B cell (primary cell): ENCODE measurements at regions of chr1 and their contacts with region 1.

Region 1: DNA sequence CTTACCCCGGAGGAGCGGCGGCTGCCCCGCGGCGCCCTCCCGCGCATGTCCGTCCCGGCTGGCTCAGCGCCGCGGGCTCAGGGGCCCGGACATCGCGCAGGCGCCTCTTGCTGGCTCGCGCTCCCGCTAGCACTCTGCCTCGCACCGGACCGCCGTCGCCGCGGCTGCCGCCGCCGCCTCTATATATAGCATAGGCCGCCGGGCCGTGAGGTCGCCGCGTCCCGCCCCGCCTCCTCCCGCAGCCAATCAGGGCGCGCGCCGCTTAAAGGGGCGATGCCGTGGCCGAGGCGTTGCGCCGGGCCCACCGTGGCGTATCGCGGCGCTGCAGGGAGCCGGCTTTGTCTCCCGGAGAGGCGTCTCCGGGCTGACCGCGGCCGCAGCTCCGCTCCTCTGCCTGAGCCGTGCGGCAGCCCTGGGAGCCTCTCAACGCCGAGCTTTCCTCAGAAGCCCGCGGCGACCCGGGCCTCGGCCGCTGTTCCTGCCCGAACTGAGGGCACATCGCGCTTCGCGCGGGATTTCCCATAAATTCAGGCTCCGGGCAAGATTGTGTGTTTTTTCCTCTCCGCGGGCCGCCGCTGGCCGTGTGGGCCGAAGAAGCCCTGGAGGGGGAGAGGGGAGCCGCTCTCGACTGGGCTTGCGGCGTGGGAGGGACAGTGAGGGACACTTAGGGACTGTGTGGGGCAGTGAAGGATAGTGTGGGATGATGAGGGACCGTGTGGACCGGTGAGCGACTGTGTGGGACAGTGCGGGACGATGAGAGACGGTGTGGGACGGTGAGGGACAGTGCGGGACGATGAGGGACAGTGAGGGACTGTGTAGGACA is at the start of gene ERRFI1:
- DNase-seq: peak; percentile 92
- ATAC-seq: peak; percentile 91
- H3K4me3 ChIP-seq: peak within 1 kb of the TSS in 4 of 5 experiments; percentile 48 to 68 (median 56)
- H3K4me3 Mint-ChIP-seq: peak within 1 kb of the TSS; percentile 90
- H3K27ac ChIP-seq: no peak within 1 kb of the TSS
- H3K27ac Mint-ChIP-seq: peak within 1 kb of the TSS; percentile 72
- H3K4me1 ChIP-seq: peaks cover 11 to 16% of the 10 kb centered on the region in 2 donors
- H3K4me1 Mint-ChIP-seq: peaks cover 10% of the 10 kb centered on the region
- H3K27me3 ChIP-seq: peaks cover 5 to 25% (median 15%) of the 10 kb centered on the region in 4 experiments
- H3K27me3 Mint-ChIP-seq: peaks cover 24% of the 10 kb centered on the region
- CTCF ChIP-seq: no peak
- total RNA-seq, gene ERRFI1: 1.5 and 2.0 TPM in 2 replicates

Region 2: GRCh38 chr1:8040586-8040985 is 14.2 kb after region 1 on chr1:
- CTCF ChIA-PET with region 1: no interaction called
- POLR2A ChIA-PET with region 1: no interaction called
- intact Hi-C with region 1: no loop called
- DNase-seq: no peak
- ATAC-seq: no peak
- H3K4me3 ChIP-seq: no peak overlapping the region
- H3K4me3 Mint-ChIP-seq: no peak overlapping the region
- H3K27ac ChIP-seq: no peak overlapping the region
- H3K27ac Mint-ChIP-seq: no peak overlapping the region
- H3K4me1 ChIP-seq: no peaks in the 10 kb centered on the region
- H3K4me1 Mint-ChIP-seq: no peaks in the 10 kb centered on the region
- H3K27me3 ChIP-seq: no peaks in the 10 kb centered on the region
- H3K27me3 Mint-ChIP-seq: peaks cover 19% of the 10 kb centered on the region
- CTCF ChIP-seq: no peak

Region 3: DNA sequence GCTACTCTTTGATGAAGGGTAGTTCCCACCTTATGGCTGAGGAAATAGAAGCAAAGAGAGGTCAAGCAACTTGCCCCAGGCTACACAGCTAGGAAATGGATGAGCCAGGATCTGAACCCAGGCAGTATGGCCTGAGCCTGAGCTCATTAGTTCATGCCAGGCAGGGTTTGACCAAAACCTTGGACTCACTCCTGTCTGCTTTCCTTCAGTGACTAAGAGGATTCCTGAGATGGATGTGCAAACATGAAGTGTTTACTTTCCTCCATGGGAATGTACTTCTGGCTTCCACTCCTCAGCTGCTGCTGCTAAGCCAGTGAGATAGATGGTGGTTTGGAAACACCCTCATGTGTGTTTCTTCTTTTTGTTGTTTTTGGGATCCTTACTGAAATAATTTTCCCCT is 34.8 kb after region 1 on chr1:
- CTCF ChIA-PET with region 1: no interaction called
- POLR2A ChIA-PET with region 1: no interaction called
- intact Hi-C with region 1: no loop called
- DNase-seq: no peak
- ATAC-seq: no peak
- H3K4me3 ChIP-seq: no peak overlapping the region
- H3K4me3 Mint-ChIP-seq: no peak overlapping the region
- H3K27ac ChIP-seq: no peak overlapping the region
- H3K27ac Mint-ChIP-seq: no peak overlapping the region
- H3K4me1 ChIP-seq: no peaks in the 10 kb centered on the region
- H3K4me1 Mint-ChIP-seq: no peaks in the 10 kb centered on the region
- H3K27me3 ChIP-seq: peaks cover 0 to 4% (median 1%) of the 10 kb centered on the region in 4 experiments
- H3K27me3 Mint-ChIP-seq: peaks cover 34% of the 10 kb centered on the region
- CTCF ChIP-seq: no peak

Region 4: DNA sequence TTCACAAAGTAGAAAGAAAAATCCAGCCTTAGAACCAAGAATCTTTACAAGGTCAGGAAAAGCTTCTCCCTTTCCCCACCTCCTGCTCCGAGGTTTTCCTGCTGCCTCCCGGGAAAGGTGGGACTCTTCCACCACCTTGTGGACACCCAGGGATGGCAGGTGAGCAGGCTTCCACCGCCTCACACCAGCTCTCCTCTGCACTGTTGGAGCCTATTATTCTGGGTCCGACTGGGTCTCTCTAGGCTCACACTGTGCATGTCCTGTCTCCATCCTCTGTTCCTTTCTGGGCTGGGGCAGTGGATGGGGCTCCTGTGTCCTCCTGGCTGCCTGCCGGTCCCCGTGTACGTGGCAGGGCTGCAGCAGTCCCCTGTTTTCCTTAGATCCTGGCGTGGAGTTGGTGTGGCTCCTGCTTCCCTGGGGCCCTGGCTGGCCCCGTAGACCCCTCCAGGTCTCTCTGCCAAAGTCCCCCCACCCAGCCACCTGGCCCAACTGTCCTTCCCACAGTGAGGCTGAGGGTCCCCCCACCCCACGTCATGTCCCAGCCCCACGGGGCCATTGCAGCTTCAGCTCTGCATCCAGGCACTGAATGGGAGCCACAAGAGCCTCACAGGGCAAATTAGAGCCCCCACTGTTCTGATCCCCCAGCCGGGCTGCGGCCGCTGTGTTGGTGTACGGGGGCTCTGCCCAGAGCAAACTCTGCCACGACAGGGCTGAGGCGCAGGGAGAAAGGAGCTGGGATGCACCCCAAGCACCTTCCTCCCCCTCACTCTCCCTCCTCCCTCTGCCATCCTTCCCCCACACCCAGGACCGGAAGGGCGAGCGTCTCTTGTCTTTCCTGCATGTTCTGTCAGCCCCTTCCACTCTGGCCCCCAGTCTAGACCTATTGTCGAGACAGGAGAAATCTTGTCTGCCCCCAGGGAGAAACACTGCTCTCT is 288.2 kb after region 1 on chr1:
- CTCF ChIA-PET with region 1: interaction called, 4 read pairs
- POLR2A ChIA-PET with region 1: no interaction called
- intact Hi-C with region 1: loop called (anchors 1 kb)
- DNase-seq: no peak
- ATAC-seq: no peak
- H3K4me3 ChIP-seq: no peak overlapping the region
- H3K4me3 Mint-ChIP-seq: no peak overlapping the region
- H3K27ac ChIP-seq: no peak overlapping the region
- H3K27ac Mint-ChIP-seq: no peak overlapping the region
- H3K4me1 ChIP-seq: peaks cover 11 to 14% of the 10 kb centered on the region in 2 donors
- H3K4me1 Mint-ChIP-seq: peaks cover 11% of the 10 kb centered on the region
- H3K27me3 ChIP-seq: peaks cover 0 to 54% (median 19%) of the 10 kb centered on the region in 4 experiments
- H3K27me3 Mint-ChIP-seq: peaks cover 45% of the 10 kb centered on the region
- CTCF ChIP-seq: no peak

Region 5: GRCh38 chr1:8878448-8879347 is 852.3 kb after region 1 on chr1 and contains the start of gene ENO1:
- CTCF ChIA-PET with region 1: no interaction called
- POLR2A ChIA-PET with region 1: no interaction called
- intact Hi-C with region 1: loop called (anchors 2 kb)
- DNase-seq: peak; percentile 100
- ATAC-seq: peak; percentile 87
- H3K4me3 ChIP-seq: peak within 1 kb of the TSS; percentile 78 to 94 (median 88)
- H3K4me3 Mint-ChIP-seq: peak within 1 kb of the TSS; percentile 95
- H3K27ac ChIP-seq: peak within 1 kb of the TSS; percentile 94 to 95
- H3K27ac Mint-ChIP-seq: peak within 1 kb of the TSS; percentile 97
- H3K4me1 ChIP-seq: peaks cover 31 to 36% of the 10 kb centered on the region in 2 donors
- H3K4me1 Mint-ChIP-seq: peaks cover 46% of the 10 kb centered on the region
- H3K27me3 ChIP-seq: no peaks in the 10 kb centered on the region
- H3K27me3 Mint-ChIP-seq: no peaks in the 10 kb centered on the region
- CTCF ChIP-seq: no peak
- total RNA-seq, gene ENO1: 223 and 237 TPM in 2 replicates